Activated naive CD4-positive, alpha-beta T cell treated with anti-CD3 and anti-CD28 coated beads for 36 hours (primary cell): ENCODE measurements at regions of chr17 and their contacts with region 1.

Region 1: DNA sequence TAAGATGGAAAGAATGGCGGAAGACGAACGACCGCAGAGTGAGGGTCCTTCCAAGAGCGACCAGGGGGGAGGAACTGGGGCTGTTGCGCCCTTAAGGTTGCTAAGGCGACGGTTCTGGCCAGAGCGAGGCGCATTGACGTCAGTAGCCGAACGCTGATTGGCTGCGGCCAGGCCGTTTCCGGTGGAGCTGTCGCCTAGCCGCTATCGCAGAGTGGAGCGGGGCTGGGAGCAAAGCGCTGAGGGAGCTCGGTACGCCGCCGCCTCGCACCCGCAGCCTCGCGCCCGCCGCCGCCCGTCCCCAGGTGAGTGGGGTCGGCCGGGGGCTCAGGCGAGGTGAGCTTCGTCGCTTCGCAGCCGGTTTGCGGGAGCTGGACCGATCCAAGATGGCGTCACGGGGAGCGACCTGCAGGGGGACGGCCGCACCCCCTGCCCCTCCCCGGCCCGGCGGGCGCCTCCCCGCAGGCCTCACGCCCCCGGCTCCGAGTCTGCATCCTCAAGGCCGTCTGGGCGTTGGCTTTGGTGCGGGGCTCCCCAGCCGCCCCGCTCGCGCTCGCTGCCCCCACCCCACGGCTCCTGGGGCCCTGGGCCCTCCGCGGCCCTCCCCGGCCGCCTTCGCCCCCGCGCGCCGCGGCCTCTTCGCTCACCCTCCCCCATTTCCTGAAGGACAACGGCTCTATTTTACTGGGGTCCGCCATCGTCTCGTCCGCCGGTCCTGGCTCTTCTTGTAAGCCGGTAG is at the start of gene PRKAR1A:
- DNase-seq: peak; percentile 95
- H3K4me3 Mint-ChIP-seq: peak within 1 kb of the TSS; percentile 99
- H3K27ac Mint-ChIP-seq: peak within 1 kb of the TSS; percentile 99
- H3K4me1 Mint-ChIP-seq: peaks cover 41% of the 10 kb centered on the region
- H3K27me3 Mint-ChIP-seq: no peaks in the 10 kb centered on the region
- total RNA-seq, gene PRKAR1A: 151 TPM

Region 2: GRCh38 chr17:68184816-68185436 is 327.5 kb before region 1 on chr17:
- CTCF ChIA-PET with region 1: no interaction called
- intact Hi-C with region 1: loop called (anchors 5 kb)
- DNase-seq: peak; percentile 78
- H3K4me3 Mint-ChIP-seq: peak overlapping the region; percentile 40
- H3K27ac Mint-ChIP-seq: peak overlapping the region; percentile 68
- H3K4me1 Mint-ChIP-seq: peaks cover 48% of the 10 kb centered on the region
- H3K27me3 Mint-ChIP-seq: no peaks in the 10 kb centered on the region

Region 3: GRCh38 chr17:68247445-68248198 is 264.8 kb before region 1 on chr17 and contains the start of gene AMZ2:
- CTCF ChIA-PET with region 1: no interaction called
- intact Hi-C with region 1: loop called (anchors 2 kb)
- DNase-seq: peak; percentile 94
- H3K4me3 Mint-ChIP-seq: peak within 1 kb of the TSS; percentile 89
- H3K27ac Mint-ChIP-seq: peak within 1 kb of the TSS; percentile 95
- H3K4me1 Mint-ChIP-seq: peaks cover 31% of the 10 kb centered on the region
- H3K27me3 Mint-ChIP-seq: no peaks in the 10 kb centered on the region
- total RNA-seq, gene AMZ2: 190 to 195 TPM

Region 4: GRCh38 chr17:68497885-68498319 is 14.5 kb before region 1 on chr17:
- CTCF ChIA-PET with region 1: interaction called, 5 read pairs
- intact Hi-C with region 1: loop called (anchors 2 kb)
- DNase-seq: peak; percentile 22
- H3K4me3 Mint-ChIP-seq: peak overlapping the region; percentile 16
- H3K27ac Mint-ChIP-seq: peak overlapping the region; percentile 36
- H3K4me1 Mint-ChIP-seq: peaks cover 16% of the 10 kb centered on the region
- H3K27me3 Mint-ChIP-seq: peaks cover 3% of the 10 kb centered on the region

Region 5: GRCh38 chr17:68533887-68534694 is 21.7 kb after region 1 on chr17:
- CTCF ChIA-PET with region 1: interaction called, 5 read pairs
- intact Hi-C with region 1: loop called (anchors 1 kb)
- DNase-seq: no peak
- H3K4me3 Mint-ChIP-seq: no peak overlapping the region
- H3K27ac Mint-ChIP-seq: no peak overlapping the region
- H3K4me1 Mint-ChIP-seq: peaks cover 13% of the 10 kb centered on the region
- H3K27me3 Mint-ChIP-seq: no peaks in the 10 kb centered on the region

Region 6: GRCh38 chr17:68559316-68559715 is 46.9 kb after region 1 on chr17:
- CTCF ChIA-PET with region 1: no interaction called
- intact Hi-C with region 1: no loop called
- DNase-seq: no peak
- H3K4me3 Mint-ChIP-seq: no peak overlapping the region
- H3K27ac Mint-ChIP-seq: no peak overlapping the region
- H3K4me1 Mint-ChIP-seq: no peaks in the 10 kb centered on the region
- H3K27me3 Mint-ChIP-seq: no peaks in the 10 kb centered on the region

Region 7: GRCh38 chr17:68670967-68671693 is 158.7 kb after region 1 on chr17:
- CTCF ChIA-PET with region 1: no interaction called
- intact Hi-C with region 1: no loop called
- DNase-seq: no peak
- H3K4me3 Mint-ChIP-seq: no peak overlapping the region
- H3K27ac Mint-ChIP-seq: no peak overlapping the region
- H3K4me1 Mint-ChIP-seq: no peaks in the 10 kb centered on the region
- H3K27me3 Mint-ChIP-seq: peaks cover 12% of the 10 kb centered on the region

Region 8: GRCh38 chr17:69327060-69327831 is 814.8 kb after region 1 on chr17 and contains the start of gene ABCA5:
- CTCF ChIA-PET with region 1: no interaction called
- intact Hi-C with region 1: loop called (anchors 1 kb)
- DNase-seq: peak; percentile 92
- H3K4me3 Mint-ChIP-seq: peak within 1 kb of the TSS; percentile 93
- H3K27ac Mint-ChIP-seq: peak within 1 kb of the TSS; percentile 95
- H3K4me1 Mint-ChIP-seq: peaks cover 31% of the 10 kb centered on the region
- H3K27me3 Mint-ChIP-seq: peaks cover 2% of the 10 kb centered on the region
- total RNA-seq, gene ABCA5: 14.3 to 15.1 TPM